ENCODE measurements at regions of chr4 and their contacts with region 1.

Region 1: DNA sequence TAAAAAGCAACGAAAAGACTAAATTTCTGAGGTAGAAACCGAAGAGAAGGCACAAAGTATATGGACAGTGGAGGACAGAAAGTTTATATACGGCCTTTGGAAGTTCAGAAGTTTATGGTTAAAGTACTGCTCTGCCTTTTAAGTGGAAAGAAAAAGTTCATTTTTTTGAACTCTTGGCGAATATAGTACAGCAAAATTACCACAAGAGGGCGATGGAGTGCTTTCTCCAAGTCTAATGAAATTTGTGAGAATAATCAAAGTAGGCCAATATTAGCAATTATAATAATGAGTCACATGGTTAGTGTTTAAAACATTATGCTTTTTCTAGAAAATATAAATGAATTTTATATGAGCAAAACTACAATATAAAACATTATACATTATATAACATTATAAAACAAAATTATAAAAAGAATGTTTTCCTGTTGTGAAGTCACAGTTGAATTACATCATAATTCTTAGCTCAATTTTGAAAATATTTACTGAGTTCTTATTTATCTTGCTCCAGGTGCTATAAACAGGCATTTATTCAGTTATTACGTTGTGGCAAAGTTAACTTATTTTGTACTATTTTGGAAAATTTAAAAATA is 136.2 kb upstream of the BMPR1B start:
- DNase-seq: peak in 4 of 5 donors; percentile 18 to 32 (median 22)
- H3K4me3 ChIP-seq: no peak overlapping the region
- H3K4me3 Mint-ChIP-seq: no peak overlapping the region
- H3K27ac ChIP-seq: no peak overlapping the region
- H3K27ac Mint-ChIP-seq: no peak overlapping the region
- H3K4me1 ChIP-seq: no peaks in the 10 kb centered on the region
- H3K4me1 Mint-ChIP-seq: peaks cover 0 to 1% (median 0%) of the 10 kb centered on the region in 4 donors
- H3K27me3 ChIP-seq: no peaks in the 10 kb centered on the region
- H3K27me3 Mint-ChIP-seq: no peaks in the 10 kb centered on the region

Region 2: GRCh38 chr4:94610145-94610544 is 11.4 kb before region 1 on chr4:
- CTCF ChIA-PET with region 1: interaction called, 15 read pairs
- POLR2A ChIA-PET with region 1: no interaction called
- intact Hi-C with region 1: no loop called
- DNase-seq: no peak
- H3K4me3 ChIP-seq: no peak overlapping the region
- H3K4me3 Mint-ChIP-seq: no peak overlapping the region
- H3K27ac ChIP-seq: no peak overlapping the region
- H3K27ac Mint-ChIP-seq: peak overlapping the region in 1 of 7 donors; percentile 55
- H3K4me1 ChIP-seq: no peaks in the 10 kb centered on the region
- H3K4me1 Mint-ChIP-seq: peaks cover 0 to 11% (median 6%) of the 10 kb centered on the region in 4 donors
- H3K27me3 ChIP-seq: no peaks in the 10 kb centered on the region
- H3K27me3 Mint-ChIP-seq: no peaks in the 10 kb centered on the region

Region 3: DNA sequence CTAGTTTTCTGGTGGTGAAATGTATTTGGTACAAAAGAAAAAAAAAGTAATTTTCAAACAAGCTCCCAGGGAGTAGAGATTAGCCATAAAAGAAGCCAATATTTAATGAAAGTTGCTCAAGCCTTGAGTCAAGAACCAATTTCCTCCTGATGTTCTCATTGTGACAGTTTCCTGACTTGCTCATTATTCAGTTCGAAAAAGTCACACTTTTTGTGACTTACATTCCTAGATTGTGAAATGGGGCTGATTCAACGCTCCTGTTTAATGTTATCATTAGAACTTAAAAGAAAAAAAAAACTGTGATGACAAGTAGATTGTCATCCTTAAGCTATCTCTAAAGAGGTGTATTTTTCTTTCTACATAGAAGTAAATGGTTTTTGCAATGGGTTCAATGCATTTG is 13.6 kb after region 1 on chr4:
- CTCF ChIA-PET with region 1: interaction called, 11 read pairs
- POLR2A ChIA-PET with region 1: no interaction called
- intact Hi-C with region 1: no loop called
- DNase-seq: no peak
- H3K4me3 ChIP-seq: no peak overlapping the region
- H3K4me3 Mint-ChIP-seq: no peak overlapping the region
- H3K27ac ChIP-seq: no peak overlapping the region
- H3K27ac Mint-ChIP-seq: no peak overlapping the region
- H3K4me1 ChIP-seq: no peaks in the 10 kb centered on the region
- H3K4me1 Mint-ChIP-seq: no peaks in the 10 kb centered on the region
- H3K27me3 ChIP-seq: no peaks in the 10 kb centered on the region
- H3K27me3 Mint-ChIP-seq: no peaks in the 10 kb centered on the region

Region 4: DNA sequence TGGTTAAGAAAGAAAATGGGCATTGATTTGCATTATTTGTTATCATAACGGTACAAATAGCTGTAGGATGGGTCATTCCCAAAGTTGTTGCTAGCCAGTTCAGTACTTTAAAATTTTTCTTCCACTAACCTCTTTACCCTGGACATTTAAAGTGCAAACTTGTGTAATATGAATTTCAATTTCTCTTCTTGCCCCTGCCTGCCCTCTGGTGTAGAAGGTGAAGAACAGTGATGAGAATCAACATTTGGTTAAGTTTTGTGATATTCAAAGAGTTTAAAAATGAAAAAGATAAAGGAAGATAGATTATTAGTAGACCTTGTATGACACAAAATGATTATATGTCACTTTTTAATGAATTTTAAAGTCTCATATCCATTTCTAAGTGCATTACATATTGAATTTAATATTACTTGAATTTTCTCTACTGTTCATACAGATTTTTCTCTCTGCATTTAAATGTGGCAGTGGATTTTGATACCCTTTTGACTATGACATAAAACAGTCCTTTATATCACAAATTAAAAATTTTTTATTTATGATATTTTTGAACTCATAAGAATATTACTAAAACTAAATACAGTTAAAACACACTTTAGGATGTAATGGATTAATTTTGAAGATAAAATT is 473.9 kb after region 1 on chr4:
- CTCF ChIA-PET with region 1: no interaction called
- POLR2A ChIA-PET with region 1: no interaction called
- intact Hi-C with region 1: loop called (anchors 1 kb)
- DNase-seq: peak in 1 of 5 donors; percentile 5
- H3K4me3 ChIP-seq: no peak overlapping the region
- H3K4me3 Mint-ChIP-seq: no peak overlapping the region
- H3K27ac ChIP-seq: no peak overlapping the region
- H3K27ac Mint-ChIP-seq: no peak overlapping the region
- H3K4me1 ChIP-seq: no peaks in the 10 kb centered on the region
- H3K4me1 Mint-ChIP-seq: no peaks in the 10 kb centered on the region
- H3K27me3 ChIP-seq: no peaks in the 10 kb centered on the region
- H3K27me3 Mint-ChIP-seq: peaks cover 0 to 2% of the 10 kb centered on the region in 2 donors

Measured in CD4-positive, alpha-beta memory T cell (primary cell).